ENCODE measurements at regions of chr22 and their contacts with region 1.

Region 1: DNA sequence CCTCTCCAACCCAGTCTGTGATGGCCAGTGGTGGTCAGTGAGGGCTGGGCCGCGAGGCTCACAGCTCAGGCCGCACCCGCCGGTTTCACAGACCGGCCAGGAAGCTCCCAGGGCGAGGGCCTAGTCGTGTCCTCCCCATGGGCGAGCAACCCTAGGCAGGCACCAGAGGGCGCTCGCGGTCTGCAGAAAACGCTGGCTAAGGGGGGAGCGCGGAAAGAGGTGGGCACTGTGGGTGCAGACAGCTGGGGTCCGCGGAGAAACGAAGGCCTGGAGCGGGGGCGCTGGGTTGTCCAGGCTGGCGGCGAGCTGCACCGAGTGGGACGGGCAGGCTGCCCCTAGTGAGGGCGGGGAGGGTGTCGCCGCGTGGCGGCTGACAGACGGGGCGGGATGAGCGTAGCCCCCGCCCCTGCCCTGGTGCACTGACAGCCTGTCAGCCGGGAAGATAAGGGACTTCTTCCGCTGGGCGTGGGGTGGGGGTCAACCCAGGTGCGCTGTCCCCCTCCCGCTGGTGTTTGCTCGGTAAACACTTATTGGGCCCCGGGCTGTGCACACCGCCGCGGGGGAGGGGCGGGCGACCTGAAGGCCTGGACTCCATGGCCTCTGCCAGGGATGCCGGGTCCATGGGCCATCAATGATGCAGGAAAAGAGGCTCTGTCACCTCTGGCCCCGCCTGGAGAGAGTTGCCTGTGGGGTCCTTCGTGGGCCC is 7.5 kb downstream of the GP1BB start:
- DNase-seq: peak; percentile 73
- ATAC-seq: peak; percentile 91
- H3K4me3 ChIP-seq: peak overlapping the region; percentile 70
- H3K27ac ChIP-seq: no peak overlapping the region
- H3K4me1 ChIP-seq: no peaks in the 10 kb centered on the region
- H3K27me3 ChIP-seq: no peaks in the 10 kb centered on the region
- CTCF ChIP-seq: peak; percentile 82

Region 2: DNA sequence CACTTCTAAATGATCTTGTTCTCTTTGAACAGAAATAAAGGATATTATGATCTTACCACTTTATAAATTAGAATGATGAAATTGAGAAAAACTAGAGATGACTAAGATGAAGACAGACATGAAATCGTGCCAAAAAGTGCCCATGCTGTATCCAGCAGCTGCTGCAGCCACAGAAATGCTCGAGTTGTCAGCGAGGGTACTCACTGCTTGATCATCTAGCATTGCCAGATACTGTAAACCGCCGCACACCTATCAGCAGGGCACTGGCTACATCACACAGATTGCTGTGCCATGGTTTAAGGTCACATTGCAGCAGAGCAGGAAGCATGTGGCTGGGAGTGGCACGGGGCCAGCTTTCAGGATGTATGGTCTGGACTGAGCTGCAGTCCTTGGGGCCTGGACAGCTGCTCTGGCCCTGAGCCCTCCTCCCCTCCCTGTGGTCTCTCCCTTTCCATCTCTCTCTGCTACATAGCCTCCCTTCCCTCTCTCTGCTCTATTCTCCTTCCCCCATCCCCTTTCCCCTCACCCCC is 67.5 kb before region 1 on chr22:
- CTCF ChIA-PET with region 1: no interaction called
- POLR2A ChIA-PET with region 1: no interaction called
- intact Hi-C with region 1: no loop called
- DNase-seq: peak; percentile 30
- ATAC-seq: peak; percentile 51; the same call in 1 of the 2 replicates
- H3K4me3 ChIP-seq: no peak overlapping the region
- H3K27ac ChIP-seq: no peak overlapping the region
- H3K4me1 ChIP-seq: no peaks in the 10 kb centered on the region
- H3K27me3 ChIP-seq: no peaks in the 10 kb centered on the region
- CTCF ChIP-seq: no peak

Region 3: DNA sequence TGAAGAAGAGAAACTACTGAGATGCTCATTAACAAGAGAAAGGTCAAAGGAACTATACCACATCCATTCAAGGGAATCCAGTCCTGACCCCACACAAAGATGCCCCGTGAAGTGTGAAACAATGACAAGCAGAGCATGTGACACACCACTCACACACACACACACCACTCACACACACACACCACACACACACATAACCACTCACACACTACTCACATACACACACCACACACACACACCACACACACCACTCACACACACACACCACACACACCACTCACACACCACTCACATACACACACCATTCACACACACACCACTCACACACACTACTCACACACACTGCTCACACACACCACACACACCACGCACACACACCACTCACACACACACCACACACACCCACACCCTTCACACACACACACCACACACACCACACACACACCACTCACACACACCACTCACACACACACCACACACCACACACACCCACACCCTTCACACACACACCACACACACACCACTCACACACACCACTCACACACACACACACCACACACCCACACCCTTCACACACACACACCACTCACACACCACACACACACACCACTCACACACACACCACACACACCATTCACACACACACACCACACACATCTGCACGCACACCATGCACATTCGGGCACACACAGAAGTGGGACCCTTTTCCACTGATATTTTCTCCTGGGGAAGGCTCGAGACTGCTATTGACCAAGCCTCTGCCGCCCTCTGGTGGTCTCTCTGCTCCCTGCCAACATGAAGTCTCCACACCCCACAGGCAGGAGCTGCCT is 178.8 kb after region 1 on chr22:
- CTCF ChIA-PET with region 1: interaction called, 18 read pairs
- POLR2A ChIA-PET with region 1: no interaction called
- intact Hi-C with region 1: loop called (anchors 1 kb)
- DNase-seq: peak; percentile 75
- ATAC-seq: peak; percentile 97
- H3K4me3 ChIP-seq: no peak overlapping the region
- H3K27ac ChIP-seq: no peak overlapping the region
- H3K4me1 ChIP-seq: no peaks in the 10 kb centered on the region
- H3K27me3 ChIP-seq: no peaks in the 10 kb centered on the region
- CTCF ChIP-seq: peak; percentile 87

Measured in PC-3 (cell line).